ENCODE measurements at regions of chr19 and their contacts with region 1.

Region 1: DNA sequence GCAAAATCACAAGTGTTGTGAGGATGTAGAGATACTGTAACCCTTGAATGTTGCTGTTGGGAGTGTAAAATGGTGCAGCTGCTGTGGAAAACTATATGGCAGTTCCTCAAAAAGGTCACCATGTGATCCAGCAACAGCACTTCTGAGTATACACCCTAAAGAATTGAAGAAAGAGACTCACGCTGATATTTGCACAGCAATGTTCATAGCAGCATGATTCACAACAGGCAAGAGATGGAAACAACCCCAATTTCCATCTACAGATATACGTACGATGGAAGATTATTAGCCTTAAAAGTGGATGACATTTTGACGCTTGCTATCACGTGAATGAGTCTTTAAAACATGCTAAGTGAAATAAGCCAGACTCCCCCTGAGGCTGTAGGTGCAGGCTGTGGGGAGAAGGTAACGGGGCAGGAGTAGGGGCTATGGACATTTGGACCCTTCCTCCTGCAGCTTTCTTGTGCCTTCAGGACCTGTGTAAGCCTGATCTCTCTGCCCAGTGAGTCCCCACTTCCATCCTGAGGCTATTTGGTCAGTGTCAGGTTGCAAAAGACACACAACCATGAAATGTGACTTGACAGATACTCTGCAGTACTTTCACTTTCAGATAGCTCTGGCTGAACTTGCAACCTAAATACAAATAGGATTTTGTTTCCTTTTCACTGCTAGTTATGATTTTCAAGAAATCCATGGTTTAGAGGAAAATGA is 17.6 kb upstream of the EID2 start:
- DNase-seq: no peak
- ATAC-seq: no peak

Region 2: DNA sequence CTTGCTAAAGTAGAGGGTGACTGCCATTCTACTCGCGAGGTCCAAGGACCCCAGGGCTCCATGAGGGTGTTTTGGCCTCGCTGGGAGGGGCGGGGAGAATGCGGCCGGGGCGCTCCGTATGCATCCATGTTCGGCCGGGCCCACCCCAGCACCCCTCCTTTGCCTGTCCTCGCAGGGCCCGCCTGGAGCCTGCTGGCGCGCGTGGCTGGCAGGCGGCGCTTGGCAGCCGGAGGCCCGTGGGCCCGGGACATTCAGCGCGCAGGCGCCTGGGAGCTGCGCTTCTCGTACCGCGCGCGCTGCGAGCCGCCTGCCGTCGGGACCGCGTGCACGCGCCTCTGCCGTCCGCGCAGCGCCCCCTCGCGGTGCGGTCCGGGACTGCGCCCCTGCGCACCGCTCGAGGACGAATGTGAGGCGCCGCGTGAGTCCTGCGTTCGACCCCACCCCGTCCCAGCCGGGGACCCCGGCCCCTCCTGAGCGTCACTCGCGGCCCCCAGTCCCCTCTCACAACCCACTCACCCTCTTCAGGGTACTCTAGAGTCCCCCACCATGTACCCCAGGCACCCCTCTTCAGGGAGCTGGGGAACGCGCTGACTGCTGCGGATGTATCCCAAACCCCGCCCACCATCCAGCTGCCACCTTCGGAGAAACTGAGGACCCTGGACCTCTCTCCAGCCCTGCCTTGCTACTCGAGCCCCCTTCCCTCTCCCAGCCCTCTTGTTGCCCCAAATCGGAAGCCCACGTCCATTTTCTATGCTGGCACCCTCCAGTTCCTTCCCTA is 54.8 kb before region 1 on chr19:
- intact Hi-C with region 1: no loop called
- DNase-seq: peak; percentile 70
- ATAC-seq: peak; percentile 62 to 71

Region 3: DNA sequence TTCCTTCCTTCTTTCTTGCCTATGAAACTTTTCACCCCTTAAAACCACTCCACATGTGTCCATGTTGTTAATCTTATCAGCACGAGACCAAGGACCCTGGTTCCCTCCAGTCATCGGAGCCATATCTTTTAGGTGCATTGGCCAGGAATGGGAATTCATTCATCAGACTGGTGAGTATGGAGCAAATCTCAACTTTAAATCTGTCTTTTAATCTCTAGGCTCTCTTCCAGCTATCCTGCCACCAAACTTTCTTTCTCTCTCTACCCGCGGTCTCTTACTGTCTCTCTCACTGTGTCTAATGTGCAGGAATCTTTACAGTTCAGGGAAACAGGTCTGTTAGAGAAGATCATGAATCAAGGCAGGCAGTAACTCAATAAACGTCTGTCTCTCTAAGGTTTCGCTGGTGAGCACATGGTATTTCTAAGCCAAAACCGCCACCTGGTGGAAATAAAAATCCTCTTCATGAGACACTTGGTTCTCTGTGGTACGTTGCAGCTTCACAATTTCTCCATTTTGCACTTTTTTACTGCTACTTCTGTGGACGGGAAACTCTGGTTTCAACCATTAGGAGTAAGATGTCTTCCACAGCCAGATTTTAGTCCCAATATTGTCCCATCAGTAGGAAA is 114.3 kb after region 1 on chr19:
- intact Hi-C with region 1: loop called (anchors 5 to 10 kb)
- DNase-seq: no peak
- ATAC-seq: peak in 1 of 2 donors; percentile 56

Region 4: GRCh38 chr19:39858541-39858940 is 300.9 kb after region 1 on chr19:
- intact Hi-C with region 1: loop called in 1 of 2 experiments (anchors 10 kb)
- DNase-seq: no peak
- ATAC-seq: no peak